HepG2 (cell line): ENCODE measurements at regions of chr6 and their contacts with region 1.

Region 1: DNA sequence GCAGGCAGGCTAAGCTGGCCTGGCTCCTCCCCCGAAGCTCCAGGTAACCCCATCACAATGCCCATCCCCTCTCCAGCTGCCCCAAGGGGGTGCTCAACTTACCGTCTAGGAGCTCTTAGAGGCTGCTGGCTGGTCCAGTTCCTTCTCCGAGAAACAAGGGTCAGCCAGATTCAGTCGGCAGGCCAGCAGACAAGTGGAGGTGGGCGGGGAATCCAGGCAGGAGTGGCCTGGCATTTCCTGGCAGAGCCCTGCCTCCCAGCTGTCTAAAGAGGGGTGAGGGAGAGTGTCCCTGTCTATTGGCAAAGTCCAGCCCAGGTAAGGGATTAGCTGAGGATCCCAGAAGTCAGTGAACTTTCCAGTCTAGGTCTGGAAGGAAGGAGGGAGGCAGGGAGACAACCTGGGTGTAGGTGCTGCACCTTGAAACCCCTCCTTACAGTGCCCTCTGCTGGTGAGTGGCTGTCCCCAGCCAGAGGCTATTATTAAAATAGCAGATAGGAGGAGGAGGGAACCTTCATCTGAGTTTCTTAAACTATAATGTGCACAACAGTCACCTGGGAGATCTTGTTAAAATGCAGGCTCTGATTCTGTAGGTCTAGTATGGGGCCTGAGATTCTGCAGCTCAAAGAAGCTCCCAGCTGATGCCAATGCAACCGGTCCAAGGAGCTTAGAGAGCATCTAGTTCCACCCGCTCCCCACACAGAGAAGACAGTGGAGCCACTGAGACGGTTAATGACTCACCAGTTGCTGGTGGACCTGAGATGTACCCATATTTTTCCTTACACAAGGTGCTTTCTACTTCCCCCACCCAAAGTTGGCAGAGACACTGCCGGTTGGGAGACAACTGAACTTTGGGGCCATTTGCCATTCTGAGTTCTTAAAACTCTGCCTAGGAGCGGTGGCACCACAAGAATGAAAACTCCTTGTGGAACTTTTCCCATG is at the start of gene UNC5CL:
- DNase-seq: peak; percentile 45
- ATAC-seq: peak; percentile 30
- H3K4me3 ChIP-seq: peak within 1 kb of the TSS in 2 of 3 experiments; percentile 33 to 64; a peak in 2 of 6 replicates
- H3K27ac ChIP-seq: peak within 1 kb of the TSS; percentile 94
- H3K4me1 ChIP-seq: peaks cover 78% of the 10 kb centered on the region
- H3K27me3 ChIP-seq: no peaks in the 10 kb centered on the region
- CTCF ChIP-seq: peak; percentile 79
- EP300 ChIP-seq: no peak
- POLR2A ChIP-seq: no peak
- RAD21 ChIP-seq: peak; percentile 35; the same call in 1 of the 2 replicates
- total RNA-seq, gene UNC5CL: 0.87 and 2.4 TPM in 2 replicates

Region 2: GRCh38 chr6:40957616-40958492 is 81.5 kb before region 1 on chr6:
- CTCF ChIA-PET with region 1: no interaction called
- POLR2A ChIA-PET with region 1: interaction called, 12 read pairs
- in situ Hi-C with region 1: no loop called
- intact Hi-C with region 1: no loop called
- DNase-seq: peak; percentile 88
- ATAC-seq: peak; percentile 84
- H3K4me3 ChIP-seq: peak overlapping the region in 1 of 3 experiments; percentile 4; a peak in 1 of 6 replicates
- H3K27ac ChIP-seq: no peak overlapping the region
- H3K4me1 ChIP-seq: peaks cover 82% of the 10 kb centered on the region
- H3K27me3 ChIP-seq: no peaks in the 10 kb centered on the region
- CTCF ChIP-seq: no peak
- EP300 ChIP-seq: peak in 1 of 2 experiments; percentile 2; a peak in 1 of 4 replicates
- POLR2A ChIP-seq: no peak
- RAD21 ChIP-seq: no peak

Region 3: GRCh38 chr6:40999569-40999968 is 39.8 kb before region 1 on chr6:
- CTCF ChIA-PET with region 1: no interaction called
- POLR2A ChIA-PET with region 1: interaction called, 28 read pairs
- in situ Hi-C with region 1: no loop called
- intact Hi-C with region 1: loop called (anchors 5 kb)
- DNase-seq: peak; percentile 80
- ATAC-seq: peak; percentile 82
- H3K4me3 ChIP-seq: no peak overlapping the region
- H3K27ac ChIP-seq: no peak overlapping the region
- H3K4me1 ChIP-seq: peaks cover 74% of the 10 kb centered on the region
- H3K27me3 ChIP-seq: no peaks in the 10 kb centered on the region
- CTCF ChIP-seq: peak; percentile 89
- EP300 ChIP-seq: peak in 1 of 2 experiments; percentile 6; a peak in 1 of 4 replicates
- POLR2A ChIP-seq: no peak
- RAD21 ChIP-seq: peak; percentile 46; the same call in 1 of the 2 replicates

Region 4: GRCh38 chr6:41051873-41052272 is 12.5 kb after region 1 on chr6:
- CTCF ChIA-PET with region 1: no interaction called
- POLR2A ChIA-PET with region 1: interaction called, 59 read pairs
- in situ Hi-C with region 1: no loop called
- intact Hi-C with region 1: no loop called
- DNase-seq: no peak
- ATAC-seq: no peak
- H3K4me3 ChIP-seq: no peak overlapping the region
- H3K27ac ChIP-seq: no peak overlapping the region
- H3K4me1 ChIP-seq: peaks cover 66% of the 10 kb centered on the region
- H3K27me3 ChIP-seq: no peaks in the 10 kb centered on the region
- CTCF ChIP-seq: no peak
- EP300 ChIP-seq: no peak
- POLR2A ChIP-seq: no peak
- RAD21 ChIP-seq: no peak

Region 5: GRCh38 chr6:41059556-41059955 is 20.2 kb after region 1 on chr6:
- CTCF ChIA-PET with region 1: interaction called, 25 read pairs
- POLR2A ChIA-PET with region 1: interaction called, 59 read pairs
- in situ Hi-C with region 1: no loop called
- intact Hi-C with region 1: no loop called
- DNase-seq: no peak
- ATAC-seq: no peak
- H3K4me3 ChIP-seq: no peak overlapping the region
- H3K27ac ChIP-seq: no peak overlapping the region
- H3K4me1 ChIP-seq: peaks cover 74% of the 10 kb centered on the region
- H3K27me3 ChIP-seq: no peaks in the 10 kb centered on the region
- CTCF ChIP-seq: no peak
- EP300 ChIP-seq: no peak
- POLR2A ChIP-seq: no peak
- RAD21 ChIP-seq: no peak

Region 6: GRCh38 chr6:41072676-41073623 is 33.6 kb after region 1 on chr6 and contains the start of gene NFYA:
- CTCF ChIA-PET with region 1: no interaction called
- POLR2A ChIA-PET with region 1: interaction called, 46 read pairs
- in situ Hi-C with region 1: loop called (anchors 5 kb)
- intact Hi-C with region 1: no loop called
- DNase-seq: peak; percentile 99
- ATAC-seq: peak; percentile 90
- H3K4me3 ChIP-seq: peak within 1 kb of the TSS; percentile 97 to 100 (median 98)
- H3K27ac ChIP-seq: peak within 1 kb of the TSS; percentile 97
- H3K4me1 ChIP-seq: peaks cover 43% of the 10 kb centered on the region
- H3K27me3 ChIP-seq: no peaks in the 10 kb centered on the region; a peak in 2 of 5 replicates
- CTCF ChIP-seq: peak; percentile 13; the same call in 1 of the 2 replicates
- EP300 ChIP-seq: no peak
- POLR2A ChIP-seq: peak; percentile 70 to 82
- RAD21 ChIP-seq: peak; percentile 82
- total RNA-seq, gene NFYA: 22.9 and 52.0 TPM in 2 replicates